Adrenal gland (tissue), 19 donors: ENCODE measurements at regions of chr13 and their contacts with region 1.

Region 1: DNA sequence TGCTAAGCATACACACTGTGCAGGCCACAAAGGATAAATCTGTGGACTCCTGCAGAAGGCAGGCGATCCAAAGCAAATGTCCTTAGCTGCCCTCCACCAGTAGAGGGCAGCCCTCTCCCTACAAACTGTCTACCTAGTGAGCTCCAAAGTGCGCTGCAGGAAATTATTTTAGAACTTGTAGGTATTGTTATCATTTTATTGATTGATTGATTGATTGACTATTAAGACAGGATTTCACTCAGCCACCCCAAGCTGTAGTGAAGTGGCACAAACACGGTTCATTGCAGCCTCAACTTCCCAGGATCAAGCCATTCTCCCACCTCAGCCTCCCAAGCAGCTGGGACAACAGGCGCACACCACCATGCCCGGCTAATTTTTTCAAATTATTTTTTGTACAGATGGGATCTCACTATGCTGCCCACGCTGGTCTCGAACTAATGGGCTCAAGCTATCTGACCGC is 37.3 kb downstream of the RNF6 start:
- DNase-seq: peak; percentile 66 to 86 (median 75)
- H3K4me3 ChIP-seq: no peak overlapping the region
- H3K27ac ChIP-seq: no peak overlapping the region
- H3K4me1 ChIP-seq: peaks cover 5 to 24% of the 10 kb centered on the region in 2 donors
- H3K27me3 ChIP-seq: no peaks in the 10 kb centered on the region
- CTCF ChIP-seq: peak; percentile 75 to 91 (median 85)
- POLR2A ChIP-seq: no peak

Region 2: GRCh38 chr13:26247608-26248007 is 62.8 kb after region 1 on chr13:
- intact Hi-C with region 1: no loop called
- DNase-seq: peak; percentile 34 to 75 (median 63)
- H3K4me3 ChIP-seq: no peak overlapping the region
- H3K27ac ChIP-seq: no peak overlapping the region
- H3K4me1 ChIP-seq: no peaks in the 10 kb centered on the region
- H3K27me3 ChIP-seq: no peaks in the 10 kb centered on the region
- CTCF ChIP-seq: no peak
- POLR2A ChIP-seq: no peak

Region 3: GRCh38 chr13:26266311-26266710 is 81.5 kb after region 1 on chr13:
- intact Hi-C with region 1: no loop called
- DNase-seq: no peak
- H3K4me3 ChIP-seq: no peak overlapping the region
- H3K27ac ChIP-seq: no peak overlapping the region
- H3K4me1 ChIP-seq: peaks cover 0 to 12% of the 10 kb centered on the region in 2 donors
- H3K27me3 ChIP-seq: no peaks in the 10 kb centered on the region
- CTCF ChIP-seq: no peak
- POLR2A ChIP-seq: no peak

Region 4: GRCh38 chr13:26498656-26499591 is 314.1 kb after region 1 on chr13:
- intact Hi-C with region 1: loop called (anchors 5 kb)
- DNase-seq: no peak
- H3K4me3 ChIP-seq: no peak overlapping the region
- H3K27ac ChIP-seq: peak overlapping the region in 1 of 5 donors; percentile 14
- H3K4me1 ChIP-seq: no peaks in the 10 kb centered on the region
- H3K27me3 ChIP-seq: no peaks in the 10 kb centered on the region
- CTCF ChIP-seq: no peak
- POLR2A ChIP-seq: no peak

Region 5: DNA sequence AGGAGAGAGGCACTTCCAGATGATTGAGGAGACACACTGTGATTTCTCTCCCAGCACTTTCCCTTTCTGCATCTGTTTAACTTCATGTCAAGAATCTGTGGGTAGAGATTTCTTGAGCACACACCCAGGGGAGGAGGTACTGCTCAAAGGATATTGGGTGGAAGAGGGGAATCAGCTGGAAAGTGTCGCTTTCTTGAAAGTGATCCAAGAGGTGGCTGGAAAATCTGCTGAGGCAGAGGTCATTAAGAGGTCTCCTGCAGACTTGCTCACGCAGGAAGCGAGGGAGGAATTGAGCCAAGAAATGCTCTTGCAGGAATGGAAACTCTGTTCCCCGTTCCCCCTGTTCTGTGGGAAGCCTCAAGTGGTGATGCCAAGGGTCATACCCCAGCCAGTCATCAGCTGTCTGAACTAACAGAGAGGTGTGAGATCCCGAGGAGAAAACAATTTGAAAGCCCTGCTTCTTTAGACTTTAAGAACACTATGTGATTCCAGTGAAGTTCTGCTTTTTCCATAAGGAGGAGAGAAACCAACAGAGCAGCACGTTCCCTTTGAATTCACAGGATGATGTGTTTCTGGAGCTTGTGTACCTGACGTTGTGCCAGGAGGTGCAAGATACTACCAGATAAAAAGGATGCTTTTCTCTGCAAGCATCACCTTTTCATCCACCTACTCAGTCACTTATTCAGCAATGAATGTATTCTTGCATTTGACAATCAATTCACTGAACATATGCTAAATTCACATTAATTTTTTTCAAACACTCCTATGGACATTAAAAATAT is 739.2 kb after region 1 on chr13:
- intact Hi-C with region 1: loop called in 1 of 2 experiments (anchors 5 kb)
- DNase-seq: peak; percentile 19 to 71 (median 51)
- H3K4me3 ChIP-seq: no peak overlapping the region
- H3K27ac ChIP-seq: no peak overlapping the region
- H3K4me1 ChIP-seq: peaks cover 0 to 10% of the 10 kb centered on the region in 2 donors
- H3K27me3 ChIP-seq: no peaks in the 10 kb centered on the region
- CTCF ChIP-seq: no peak
- POLR2A ChIP-seq: no peak